ENCODE measurements at regions of chr5 and their contacts with region 1.

Region 1: GRCh38 chr5:81513982-81514381 is 120.0 kb upstream of the ACOT12 start:
- DNase-seq: no peak
- H3K4me3 Mint-ChIP-seq: no peak overlapping the region
- H3K27ac Mint-ChIP-seq: no peak overlapping the region
- H3K4me1 Mint-ChIP-seq: no peaks in the 10 kb centered on the region
- H3K27me3 Mint-ChIP-seq: no peaks in the 10 kb centered on the region

Region 2: GRCh38 chr5:81525690-81526089 is 11.7 kb after region 1 on chr5:
- intact Hi-C with region 1: no loop called
- DNase-seq: no peak
- H3K4me3 Mint-ChIP-seq: peak overlapping the region; percentile 3
- H3K27ac Mint-ChIP-seq: peak overlapping the region; percentile 88
- H3K4me1 Mint-ChIP-seq: peaks cover 14% of the 10 kb centered on the region
- H3K27me3 Mint-ChIP-seq: no peaks in the 10 kb centered on the region

Region 3: DNA sequence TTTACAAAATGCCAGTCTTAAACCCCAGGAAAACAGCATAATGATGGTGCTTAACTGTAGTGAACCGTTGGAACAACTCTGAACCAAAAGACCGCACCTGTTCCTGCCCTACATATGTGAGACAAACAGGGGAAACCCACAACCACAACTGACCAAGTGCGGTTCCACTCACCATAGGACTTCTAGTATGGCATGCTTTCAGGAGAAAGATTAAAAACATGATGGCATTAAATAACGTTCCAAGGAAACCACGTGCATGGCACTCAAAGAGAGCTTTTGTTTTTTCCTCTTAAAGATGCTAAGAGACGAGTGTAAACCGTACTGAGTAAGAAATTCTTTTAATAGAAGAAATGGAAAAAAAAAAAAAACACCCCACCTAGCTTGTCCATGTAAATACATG is 117.1 kb after region 1 on chr5:
- intact Hi-C with region 1: loop called (anchors 5 kb)
- DNase-seq: peak; percentile 16
- H3K4me3 Mint-ChIP-seq: peak overlapping the region; percentile 15
- H3K27ac Mint-ChIP-seq: peak overlapping the region; percentile 13
- H3K4me1 Mint-ChIP-seq: peaks cover 7% of the 10 kb centered on the region
- H3K27me3 Mint-ChIP-seq: no peaks in the 10 kb centered on the region

Region 4: DNA sequence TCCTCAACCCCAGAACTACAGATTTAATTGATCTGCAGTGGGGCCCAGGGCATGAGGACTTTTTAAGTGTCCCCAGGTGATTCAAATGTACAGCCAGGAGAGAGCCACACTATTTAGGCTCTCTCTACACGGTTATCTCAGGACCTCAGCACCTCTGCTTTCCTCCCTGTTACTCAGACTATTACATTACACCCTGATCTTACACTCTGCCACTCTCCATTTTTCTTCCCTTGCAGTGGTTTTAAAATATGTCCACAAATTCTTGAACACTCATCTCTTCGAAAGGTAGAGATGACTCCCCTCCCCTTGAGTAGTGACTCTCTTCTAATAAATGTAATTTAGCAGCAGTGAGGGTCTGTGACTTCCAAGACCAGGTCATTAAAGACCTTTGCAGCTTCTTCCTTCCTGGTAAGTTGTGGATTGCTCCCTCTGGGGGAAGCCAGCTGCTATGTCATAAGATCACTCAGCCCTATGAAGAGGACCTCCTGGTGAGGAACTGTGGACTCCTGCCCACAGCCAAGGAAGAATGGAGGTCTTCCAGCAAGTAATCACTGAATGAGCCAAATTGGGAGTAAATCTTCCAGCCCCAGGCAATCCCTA is 324.4 kb after region 1 on chr5:
- intact Hi-C with region 1: loop called (anchors 2 kb)
- DNase-seq: no peak
- H3K4me3 Mint-ChIP-seq: no peak overlapping the region
- H3K27ac Mint-ChIP-seq: no peak overlapping the region
- H3K4me1 Mint-ChIP-seq: peaks cover 5% of the 10 kb centered on the region
- H3K27me3 Mint-ChIP-seq: peaks cover 5% of the 10 kb centered on the region